Tibial artery (tissue), 4 donors: ENCODE measurements at regions of chr18 and their contacts with region 1.

Region 1: GRCh38 chr18:36067055-36067957 is at the start of gene RPRD1A:
- DNase-seq: peak; percentile 96 to 98
- H3K4me3 ChIP-seq: peak within 1 kb of the TSS; percentile 72 to 77
- H3K27ac ChIP-seq: peak within 1 kb of the TSS; percentile 82 to 87
- H3K4me1 ChIP-seq: peaks cover 0 to 24% (median 5%) of the 10 kb centered on the region in 4 donors
- H3K27me3 ChIP-seq: peaks cover 0 to 5% of the 10 kb centered on the region in 2 donors
- CTCF ChIP-seq: no peak

Region 2: GRCh38 chr18:36035253-36035652 is 32.1 kb before region 1 on chr18:
- intact Hi-C with region 1: no loop called
- DNase-seq: no peak
- H3K4me3 ChIP-seq: no peak overlapping the region
- H3K27ac ChIP-seq: no peak overlapping the region
- H3K4me1 ChIP-seq: peaks cover 0 to 28% (median 5%) of the 10 kb centered on the region in 4 donors
- H3K27me3 ChIP-seq: no peaks in the 10 kb centered on the region
- CTCF ChIP-seq: no peak

Region 3: GRCh38 chr18:36129300-36130038 is 62.2 kb after region 1 on chr18 and contains the starts of genes ELP2 and SLC39A6:
- intact Hi-C with region 1: loop called (anchors 10 kb)
- DNase-seq: peak; percentile 98
- H3K4me3 ChIP-seq: peak within 1 kb of the TSS; percentile 73 to 81
- H3K27ac ChIP-seq: peak within 1 kb of the TSS; percentile 96 to 99
- H3K4me1 ChIP-seq: peaks cover 0 to 34% (median 28%) of the 10 kb centered on the region in 4 donors
- H3K27me3 ChIP-seq: no peaks in the 10 kb centered on the region
- CTCF ChIP-seq: no peak